ENCODE measurements at regions of chr3 and their contacts with region 1.

Region 1: DNA sequence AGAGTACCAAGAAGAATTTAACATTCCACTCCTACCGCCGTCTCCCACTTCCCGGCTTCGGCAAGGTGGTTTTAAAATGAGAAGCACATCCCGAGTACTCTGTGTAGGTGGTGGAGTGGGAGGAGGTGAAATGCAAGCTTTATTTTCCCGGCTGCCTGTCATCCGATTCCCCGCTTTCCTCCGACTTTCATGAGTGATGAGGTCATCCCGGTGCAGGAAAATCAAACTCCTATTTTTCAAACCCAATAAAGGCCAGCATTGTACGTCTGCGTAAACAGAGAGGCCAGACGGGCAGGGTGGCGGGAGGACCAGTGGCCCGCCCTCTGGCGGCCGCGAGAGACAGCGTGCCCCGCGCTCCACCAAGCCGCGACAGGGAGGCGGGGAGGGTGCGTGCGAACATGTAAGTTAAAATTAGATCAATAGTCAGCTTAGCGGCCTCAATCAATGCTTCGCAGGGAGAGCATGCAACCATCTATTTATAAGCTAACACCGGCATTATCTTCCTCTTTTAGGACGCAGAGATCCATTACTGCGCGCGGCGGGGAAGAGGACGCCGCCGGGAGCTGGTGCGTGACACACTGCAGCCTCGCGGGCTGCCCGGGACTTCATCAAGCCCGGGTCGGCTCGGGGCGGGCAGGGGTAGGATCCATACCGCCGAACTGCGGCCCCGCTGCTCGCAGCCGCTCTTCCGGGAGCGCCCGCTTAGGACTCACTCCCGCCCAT is 163.3 kb downstream of the CD47 start:
- DNase-seq: peak; percentile 69
- H3K4me3 ChIP-seq: peak overlapping the region; percentile 47 to 67 (median 52)
- H3K27ac ChIP-seq: no peak overlapping the region
- H3K4me1 ChIP-seq: no peaks in the 10 kb centered on the region
- H3K27me3 ChIP-seq: peaks cover 2% of the 10 kb centered on the region
- CTCF ChIP-seq: peak; percentile 78 to 96

Region 2: GRCh38 chr3:107870943-107871638 is 56.4 kb before region 1 on chr3:
- CTCF ChIA-PET with region 1: no interaction called
- dilution Hi-C with region 1: loop called (anchors 5 kb)
- in situ Hi-C with region 1: no loop called
- intact Hi-C with region 1: no loop called
- DNase-seq: no peak
- H3K4me3 ChIP-seq: no peak overlapping the region
- H3K27ac ChIP-seq: no peak overlapping the region
- H3K4me1 ChIP-seq: no peaks in the 10 kb centered on the region
- H3K27me3 ChIP-seq: no peaks in the 10 kb centered on the region
- CTCF ChIP-seq: no peak

Region 3: GRCh38 chr3:108079877-108080659 is 152.5 kb after region 1 on chr3:
- CTCF ChIA-PET with region 1: no interaction called
- dilution Hi-C with region 1: no loop called
- in situ Hi-C with region 1: no loop called
- intact Hi-C with region 1: no loop called
- DNase-seq: no peak
- H3K4me3 ChIP-seq: no peak overlapping the region
- H3K27ac ChIP-seq: no peak overlapping the region
- H3K4me1 ChIP-seq: no peaks in the 10 kb centered on the region
- H3K27me3 ChIP-seq: no peaks in the 10 kb centered on the region
- CTCF ChIP-seq: no peak

Measured in mammary epithelial cell (primary cell).